ENCODE measurements at regions of chr2 and their contacts with region 1.

Region 1: DNA sequence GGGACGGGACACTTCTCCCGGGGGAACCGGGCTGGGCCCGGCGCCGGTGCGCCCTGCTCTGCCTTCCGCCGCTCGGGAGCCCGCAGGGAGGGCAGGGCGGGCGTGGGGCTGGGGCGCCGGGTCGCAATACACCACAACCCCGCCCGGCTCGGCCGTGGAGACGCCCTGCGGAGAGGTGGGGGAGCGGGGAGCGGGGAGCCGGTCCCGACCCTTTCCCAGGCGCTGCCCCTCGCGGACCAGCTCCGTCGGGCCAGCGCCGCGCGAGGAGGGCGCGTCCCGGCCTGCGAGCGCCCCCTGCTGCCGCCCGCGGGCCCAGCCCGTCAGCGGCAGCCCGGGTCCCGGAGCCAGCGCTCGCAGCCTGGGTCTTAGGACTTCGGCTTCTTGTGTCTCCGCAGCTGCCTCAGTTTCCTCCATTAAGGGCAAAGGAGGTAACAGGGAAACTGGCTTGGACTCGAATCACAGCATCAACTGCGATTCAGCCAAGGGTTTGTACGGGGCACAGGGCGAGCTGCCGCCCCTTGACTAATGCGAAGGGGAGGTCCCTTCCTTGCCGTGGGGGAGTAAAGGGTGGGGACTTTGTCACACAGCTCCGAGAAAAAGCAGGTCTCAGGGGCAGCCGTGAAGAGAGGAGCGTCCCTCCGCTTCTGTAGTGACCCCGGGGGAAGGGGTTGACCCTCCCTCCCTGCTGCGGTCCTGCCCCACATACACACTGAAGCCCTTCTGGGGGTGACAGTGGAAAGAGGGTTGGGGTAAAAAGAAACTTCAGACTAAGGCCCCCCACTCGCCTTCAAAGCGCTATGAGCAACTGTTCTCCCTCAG is 717 bp upstream of the ADRA2B start:
- DNase-seq: peak in 1 of 2 experiments; percentile 84
- H3K4me3 ChIP-seq: peak overlapping the region; percentile 64
- H3K4me3 Mint-ChIP-seq: peak overlapping the region; percentile 78
- H3K27ac Mint-ChIP-seq: no peak overlapping the region
- H3K4me1 ChIP-seq: peaks cover 14% of the 10 kb centered on the region
- H3K4me1 Mint-ChIP-seq: peaks cover 5% of the 10 kb centered on the region
- H3K27me3 ChIP-seq: no peaks in the 10 kb centered on the region
- H3K27me3 Mint-ChIP-seq: peaks cover 23% of the 10 kb centered on the region
- CTCF ChIP-seq: peak; percentile 54 to 85

Region 2: DNA sequence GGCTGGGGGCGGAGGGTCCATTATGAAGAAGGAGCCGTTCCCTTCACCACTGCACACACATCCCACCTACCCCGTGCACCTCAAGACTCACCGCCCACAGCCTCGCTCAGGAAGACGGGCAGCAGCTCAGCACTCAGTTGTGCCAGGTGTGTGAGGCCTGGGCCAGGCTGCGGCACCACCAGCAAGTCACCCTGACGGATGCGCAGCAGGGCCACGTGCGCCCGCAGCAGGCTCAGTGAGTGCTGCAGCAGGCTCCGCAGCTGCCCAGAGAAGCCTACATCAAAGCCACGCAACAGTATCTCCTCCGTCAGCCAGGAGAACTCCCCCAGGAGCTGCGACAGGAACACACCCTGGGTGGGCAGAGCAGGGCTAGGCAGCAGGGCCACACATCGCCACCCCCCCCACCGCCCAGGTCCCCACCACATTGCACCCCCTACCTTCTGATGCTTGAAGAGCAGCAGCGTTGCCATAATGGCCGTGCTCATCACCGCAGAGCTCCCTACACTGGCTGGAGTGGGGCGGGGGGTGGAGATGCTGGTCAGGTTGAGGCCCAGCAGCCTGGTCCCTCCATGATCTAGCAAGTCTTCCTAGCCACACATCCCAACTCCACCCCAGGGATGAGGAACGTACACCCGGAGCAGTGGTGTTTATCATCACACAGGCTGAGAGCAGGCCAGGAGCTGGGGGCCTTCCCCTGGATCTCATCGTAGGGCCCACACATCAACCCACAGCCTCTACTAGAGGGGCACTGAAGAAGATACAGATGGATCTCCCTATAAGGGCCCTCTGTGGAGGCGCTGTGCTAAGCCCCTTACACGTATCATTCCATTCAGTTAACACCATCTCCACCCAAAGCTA is 92.5 kb before region 1 on chr2:
- CTCF ChIA-PET with region 1: interaction called, 7 read pairs
- POLR2A ChIA-PET with region 1: no interaction called
- intact Hi-C with region 1: loop called (anchors 10 kb)
- DNase-seq: peak in 1 of 2 experiments; percentile 29
- H3K4me3 ChIP-seq: no peak overlapping the region
- H3K4me3 Mint-ChIP-seq: no peak overlapping the region
- H3K27ac Mint-ChIP-seq: no peak overlapping the region
- H3K4me1 ChIP-seq: no peaks in the 10 kb centered on the region
- H3K4me1 Mint-ChIP-seq: peaks cover 5% of the 10 kb centered on the region
- H3K27me3 ChIP-seq: no peaks in the 10 kb centered on the region
- H3K27me3 Mint-ChIP-seq: no peaks in the 10 kb centered on the region
- CTCF ChIP-seq: no peak

Region 3: GRCh38 chr2:96801005-96801785 is 684.1 kb after region 1 on chr2:
- CTCF ChIA-PET with region 1: no interaction called
- POLR2A ChIA-PET with region 1: no interaction called
- intact Hi-C with region 1: no loop called
- DNase-seq: peak; percentile 65 to 75
- H3K4me3 ChIP-seq: no peak overlapping the region
- H3K4me3 Mint-ChIP-seq: no peak overlapping the region
- H3K27ac Mint-ChIP-seq: no peak overlapping the region
- H3K4me1 ChIP-seq: no peaks in the 10 kb centered on the region
- H3K4me1 Mint-ChIP-seq: peaks cover 1% of the 10 kb centered on the region
- H3K27me3 ChIP-seq: no peaks in the 10 kb centered on the region
- H3K27me3 Mint-ChIP-seq: no peaks in the 10 kb centered on the region
- CTCF ChIP-seq: peak; percentile 86 to 89

Measured in Caco-2 (cell line).